Activated CD8-positive, alpha-beta memory T cell treated with anti-CD3 and anti-CD28 coated beads, Interleukin-2, amount 10 ng/mL, durations not matched to agents 7 days and 5 days (primary cell): ENCODE measurements at regions of chr1 and their contacts with region 1.

Region 1: GRCh38 chr1:151976858-151977257 is 16.8 kb downstream of the S100A10 start:
- DNase-seq: no peak
- ATAC-seq: no peak
- H3K4me3 Mint-ChIP-seq: no peak overlapping the region
- H3K27ac Mint-ChIP-seq: no peak overlapping the region
- H3K4me1 Mint-ChIP-seq: peaks cover 22% of the 10 kb centered on the region
- H3K27me3 Mint-ChIP-seq: peaks cover 17% of the 10 kb centered on the region

Region 2: DNA sequence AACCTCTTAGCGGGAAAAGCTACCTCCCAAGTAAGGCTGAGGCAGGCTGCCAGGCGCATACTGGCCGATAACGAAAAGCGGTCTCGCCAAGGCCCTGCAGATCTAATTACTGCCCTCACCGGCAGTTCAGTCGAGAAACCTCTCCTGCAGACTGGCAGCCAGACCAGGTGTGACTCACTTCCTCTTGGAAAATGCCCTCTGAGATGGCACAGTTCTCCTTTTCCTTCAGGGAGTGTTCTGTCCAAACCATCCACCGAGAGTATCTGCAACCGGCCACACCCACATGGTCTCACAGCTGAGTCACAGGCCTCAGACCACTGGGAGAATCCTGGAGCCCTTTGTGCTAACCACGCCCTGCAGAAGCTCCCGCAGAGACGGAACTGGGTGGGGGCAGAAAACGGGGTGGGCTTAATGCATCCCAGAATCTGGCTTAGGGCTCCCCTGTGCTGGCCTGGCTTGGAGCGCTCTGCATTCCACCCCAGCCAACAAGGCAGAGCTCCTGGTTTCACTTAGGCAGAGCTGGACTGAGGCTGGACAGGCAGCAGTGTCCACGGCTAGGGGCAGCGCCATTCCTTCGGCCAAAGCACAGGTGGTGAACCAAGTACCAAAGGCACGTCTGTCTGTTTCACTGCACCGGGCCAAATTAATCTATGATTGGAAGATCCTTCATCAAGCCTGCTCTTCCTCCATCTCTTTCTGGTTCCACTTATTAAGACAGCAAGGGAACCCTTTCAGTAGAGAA is 15.7 kb after region 1 on chr1:
- CTCF ChIA-PET with region 1: interaction called, 522 read pairs
- DNase-seq: peak; percentile 71
- ATAC-seq: peak; percentile 3
- H3K4me3 Mint-ChIP-seq: peak overlapping the region; percentile 99
- H3K27ac Mint-ChIP-seq: peak overlapping the region; percentile 97
- H3K4me1 Mint-ChIP-seq: peaks cover 63% of the 10 kb centered on the region
- H3K27me3 Mint-ChIP-seq: no peaks in the 10 kb centered on the region